Activated CD8-positive, alpha-beta T cell treated with anti-CD3 and anti-CD28 coated beads for 36 hours (primary cell): ENCODE measurements at regions of chr3 and their contacts with region 1.

Region 1: GRCh38 chr3:168040607-168041208 is 55.0 kb downstream of the GOLIM4 start:
- DNase-seq: no peak
- ATAC-seq: peak; percentile 78
- H3K4me3 Mint-ChIP-seq: no peak overlapping the region
- H3K27ac Mint-ChIP-seq: no peak overlapping the region
- H3K4me1 Mint-ChIP-seq: no peaks in the 10 kb centered on the region
- H3K27me3 Mint-ChIP-seq: no peaks in the 10 kb centered on the region
- CTCF ChIP-seq: peak; percentile 61

Region 2: DNA sequence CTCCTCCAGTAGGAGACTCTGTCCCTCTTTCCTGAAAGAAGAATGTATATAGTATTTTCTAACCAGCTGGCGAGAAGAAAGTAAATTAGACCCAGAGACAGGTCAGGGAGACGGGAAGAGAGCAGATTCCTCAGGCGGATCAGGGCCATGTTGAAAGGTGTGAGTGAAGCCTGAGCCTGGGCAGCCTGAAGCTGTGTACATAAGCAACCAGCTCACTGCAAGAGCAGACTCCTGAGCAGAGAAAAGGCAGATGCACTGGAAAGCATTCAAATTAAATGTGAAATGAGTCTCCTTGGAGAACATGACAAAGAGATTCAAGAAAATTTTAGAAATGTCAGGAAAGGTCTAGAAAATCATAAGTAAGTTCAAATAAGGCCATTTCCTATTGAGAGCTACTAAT is 110.7 kb before region 1 on chr3:
- CTCF ChIA-PET with region 1: interaction called, 10 read pairs
- POLR2A ChIA-PET with region 1: no interaction called
- intact Hi-C with region 1: loop called (anchors 5 kb)
- DNase-seq: no peak
- ATAC-seq: no peak
- H3K4me3 Mint-ChIP-seq: no peak overlapping the region
- H3K27ac Mint-ChIP-seq: no peak overlapping the region
- H3K4me1 Mint-ChIP-seq: no peaks in the 10 kb centered on the region
- H3K27me3 Mint-ChIP-seq: peaks cover 1% of the 10 kb centered on the region
- CTCF ChIP-seq: no peak

Region 3: DNA sequence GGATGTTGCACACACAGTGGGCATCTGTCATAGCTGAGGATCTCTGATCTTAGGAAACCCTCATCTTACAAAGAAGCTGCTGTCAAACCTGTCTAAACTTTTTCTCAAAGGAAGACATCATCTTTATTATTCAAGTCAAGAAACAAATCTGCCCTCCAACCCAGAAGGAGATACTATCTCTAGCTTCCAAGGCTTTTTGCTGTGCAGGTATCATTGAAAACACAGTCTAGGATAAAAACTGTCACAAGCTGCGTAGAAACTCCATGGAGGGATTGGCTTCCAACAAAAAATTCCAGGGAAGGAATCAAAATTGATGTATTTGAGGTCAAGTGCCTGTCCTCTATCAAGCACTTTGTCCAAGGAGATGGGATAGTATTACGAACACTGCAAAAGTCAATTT is 34.1 kb before region 1 on chr3:
- CTCF ChIA-PET with region 1: no interaction called
- POLR2A ChIA-PET with region 1: no interaction called
- intact Hi-C with region 1: no loop called
- DNase-seq: no peak
- ATAC-seq: no peak
- H3K4me3 Mint-ChIP-seq: no peak overlapping the region
- H3K27ac Mint-ChIP-seq: no peak overlapping the region
- H3K4me1 Mint-ChIP-seq: no peaks in the 10 kb centered on the region
- H3K27me3 Mint-ChIP-seq: no peaks in the 10 kb centered on the region
- CTCF ChIP-seq: no peak

Region 4: DNA sequence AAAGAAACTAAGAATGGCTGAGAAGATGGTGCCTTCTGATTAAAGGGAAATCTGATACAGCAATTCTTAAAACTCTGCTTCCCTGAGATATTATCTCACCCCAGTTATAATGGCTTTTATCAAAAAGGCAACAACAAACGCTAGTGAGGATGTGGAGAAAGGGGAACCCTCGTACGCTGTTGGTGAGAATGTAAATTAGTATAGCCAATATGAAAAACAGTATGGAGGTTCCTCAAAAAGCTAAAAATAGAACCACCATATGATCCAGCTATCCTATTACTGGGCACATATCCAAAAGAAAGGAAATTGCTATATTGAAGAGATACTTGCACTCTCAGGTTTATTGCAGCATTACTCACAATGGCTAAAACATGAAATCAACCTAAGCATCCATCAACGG is 10.1 kb before region 1 on chr3:
- CTCF ChIA-PET with region 1: interaction called, 13 read pairs
- POLR2A ChIA-PET with region 1: no interaction called
- intact Hi-C with region 1: no loop called
- DNase-seq: no peak
- ATAC-seq: no peak
- H3K4me3 Mint-ChIP-seq: no peak overlapping the region
- H3K27ac Mint-ChIP-seq: no peak overlapping the region
- H3K4me1 Mint-ChIP-seq: peaks cover 2% of the 10 kb centered on the region
- H3K27me3 Mint-ChIP-seq: no peaks in the 10 kb centered on the region
- CTCF ChIP-seq: no peak

Region 5: GRCh38 chr3:168165390-168166269 is 124.9 kb after region 1 on chr3:
- CTCF ChIA-PET with region 1: interaction called, 92 read pairs
- POLR2A ChIA-PET with region 1: interaction called, 3 read pairs
- intact Hi-C with region 1: no loop called
- DNase-seq: peak; percentile 66
- ATAC-seq: peak; percentile 66
- H3K4me3 Mint-ChIP-seq: no peak overlapping the region
- H3K27ac Mint-ChIP-seq: no peak overlapping the region
- H3K4me1 Mint-ChIP-seq: peaks cover 4% of the 10 kb centered on the region
- H3K27me3 Mint-ChIP-seq: no peaks in the 10 kb centered on the region
- CTCF ChIP-seq: peak; percentile 71

Region 6: DNA sequence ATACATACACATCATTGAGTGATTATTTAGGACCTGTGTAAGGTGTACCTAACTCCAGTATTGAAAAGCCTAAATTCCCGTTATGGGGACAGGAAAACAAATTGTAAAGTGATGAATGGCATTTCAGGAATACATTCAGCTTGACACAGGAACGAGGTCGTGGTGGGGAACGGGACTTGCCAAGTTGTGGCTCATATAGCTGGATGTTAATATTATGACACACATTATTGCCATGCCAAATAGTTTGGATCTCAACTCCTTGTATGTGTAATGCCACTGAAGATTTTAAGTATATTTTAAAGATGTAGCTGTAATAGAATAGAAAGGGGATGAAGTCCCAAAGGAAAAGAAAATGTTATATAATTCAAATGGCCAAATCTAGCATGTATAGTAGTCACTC is 282.2 kb after region 1 on chr3:
- CTCF ChIA-PET with region 1: no interaction called
- POLR2A ChIA-PET with region 1: no interaction called
- intact Hi-C with region 1: no loop called
- DNase-seq: no peak
- ATAC-seq: no peak
- H3K4me3 Mint-ChIP-seq: no peak overlapping the region
- H3K27ac Mint-ChIP-seq: no peak overlapping the region
- H3K4me1 Mint-ChIP-seq: no peaks in the 10 kb centered on the region
- H3K27me3 Mint-ChIP-seq: no peaks in the 10 kb centered on the region
- CTCF ChIP-seq: no peak